ENCODE measurements at regions of chr9 and their contacts with region 1.

Region 1: GRCh38 chr9:9002826-9003583 is 1203.4 kb upstream of the DMAC1 start:
- DNase-seq: no peak

Region 2: DNA sequence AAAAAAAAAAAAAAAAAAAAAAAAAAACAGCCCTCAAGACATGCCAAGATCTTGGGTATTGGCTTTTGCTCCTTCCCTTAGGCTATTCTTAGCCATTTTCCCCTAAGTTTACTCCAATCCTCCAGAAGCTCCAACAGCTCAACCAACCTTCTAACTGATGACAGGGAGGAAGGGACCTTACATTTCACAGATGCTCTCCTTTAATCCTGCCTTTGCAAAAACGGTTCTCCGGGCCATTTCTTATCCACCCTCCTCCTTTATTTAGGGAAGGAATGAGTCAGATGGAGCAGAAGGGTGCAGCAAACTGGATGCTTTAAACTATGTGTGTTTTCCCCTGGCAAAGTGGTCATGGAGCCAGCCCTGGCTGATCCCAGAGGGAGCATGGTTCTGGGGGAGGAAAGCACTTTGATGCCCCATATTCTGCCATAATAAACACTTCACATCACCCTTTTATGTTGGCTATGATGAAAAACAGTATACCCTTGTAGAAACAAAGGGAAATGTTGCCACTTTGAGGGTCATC is 834.0 kb before region 1 on chr9:
- intact Hi-C with region 1: loop called in 1 of 2 experiments (anchors 10 kb)
- DNase-seq: no peak

Region 3: DNA sequence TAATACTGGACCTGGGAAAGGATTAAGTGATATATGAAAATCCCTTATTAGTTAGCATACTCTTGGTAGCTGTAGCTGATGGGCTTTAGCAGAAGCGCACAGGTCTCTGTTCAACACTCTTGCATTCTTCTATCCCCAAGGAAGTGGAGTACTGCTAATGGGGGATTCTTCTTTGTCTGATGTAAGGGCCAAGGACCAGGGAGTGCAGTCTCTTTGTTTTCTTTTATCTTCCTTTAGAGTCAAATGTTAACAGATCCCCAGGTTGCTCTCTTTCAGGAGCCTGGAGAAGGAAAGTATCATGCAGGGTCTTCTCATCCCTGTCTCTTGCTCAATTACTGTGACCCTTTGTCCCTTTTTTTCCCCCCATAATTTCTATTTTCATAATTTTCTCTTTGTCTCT is 56.5 kb before region 1 on chr9:
- intact Hi-C with region 1: no loop called
- DNase-seq: no peak

Measured in posterior vena cava (tissue), 2 donors.